H1 (cell line): ENCODE measurements at regions of chr14 and their contacts with region 1.

Region 1: GRCh38 chr14:35985495-35986218 is 159.5 kb downstream of the BRMS1L start:
- DNase-seq: no peak
- H3K4me3 ChIP-seq: no peak overlapping the region
- H3K27ac ChIP-seq: no peak overlapping the region
- H3K4me1 ChIP-seq: no peaks in the 10 kb centered on the region
- H3K27me3 ChIP-seq: no peaks in the 10 kb centered on the region
- CTCF ChIP-seq: peak in 2 of 3 experiments; percentile 8 to 29; a peak in 1 of 4 replicates
- EP300 ChIP-seq: no peak
- POLR2A ChIP-seq: no peak
- RAD21 ChIP-seq: no peak; a peak in 1 of 4 replicates

Region 2: DNA sequence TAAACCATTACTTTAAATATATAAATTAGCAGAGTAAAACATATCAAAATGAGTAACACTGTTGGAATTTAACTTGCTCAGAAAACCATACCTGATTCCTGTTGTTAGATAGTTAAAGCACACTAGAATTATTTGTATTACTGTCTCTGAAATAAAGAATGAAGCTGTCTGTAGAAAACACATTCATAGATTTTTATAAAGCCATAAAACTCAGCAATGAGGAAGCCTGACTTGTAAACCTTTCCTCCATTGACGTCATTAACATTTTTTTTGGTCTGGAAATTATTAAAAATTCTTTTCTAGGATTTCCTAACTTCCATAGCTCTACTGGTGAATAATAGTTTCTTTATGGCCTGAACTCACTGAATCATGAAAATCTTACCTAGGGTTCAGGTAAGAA is 11.9 kb before region 1 on chr14:
- CTCF ChIA-PET with region 1: interaction called, 12 read pairs
- POLR2A ChIA-PET with region 1: no interaction called
- DNase-seq: no peak
- H3K4me3 ChIP-seq: no peak overlapping the region
- H3K27ac ChIP-seq: no peak overlapping the region
- H3K4me1 ChIP-seq: no peaks in the 10 kb centered on the region
- H3K27me3 ChIP-seq: no peaks in the 10 kb centered on the region
- CTCF ChIP-seq: no peak
- EP300 ChIP-seq: no peak
- POLR2A ChIP-seq: no peak
- RAD21 ChIP-seq: no peak

Region 3: GRCh38 chr14:36021030-36021422 is 35.4 kb after region 1 on chr14:
- CTCF ChIA-PET with region 1: no interaction called
- POLR2A ChIA-PET with region 1: no interaction called
- DNase-seq: no peak
- H3K4me3 ChIP-seq: no peak overlapping the region
- H3K27ac ChIP-seq: no peak overlapping the region
- H3K4me1 ChIP-seq: no peaks in the 10 kb centered on the region
- H3K27me3 ChIP-seq: no peaks in the 10 kb centered on the region
- CTCF ChIP-seq: no peak
- EP300 ChIP-seq: no peak
- POLR2A ChIP-seq: no peak
- RAD21 ChIP-seq: no peak